ENCODE measurements at regions of chrX and their contacts with region 1.

Region 1: DNA sequence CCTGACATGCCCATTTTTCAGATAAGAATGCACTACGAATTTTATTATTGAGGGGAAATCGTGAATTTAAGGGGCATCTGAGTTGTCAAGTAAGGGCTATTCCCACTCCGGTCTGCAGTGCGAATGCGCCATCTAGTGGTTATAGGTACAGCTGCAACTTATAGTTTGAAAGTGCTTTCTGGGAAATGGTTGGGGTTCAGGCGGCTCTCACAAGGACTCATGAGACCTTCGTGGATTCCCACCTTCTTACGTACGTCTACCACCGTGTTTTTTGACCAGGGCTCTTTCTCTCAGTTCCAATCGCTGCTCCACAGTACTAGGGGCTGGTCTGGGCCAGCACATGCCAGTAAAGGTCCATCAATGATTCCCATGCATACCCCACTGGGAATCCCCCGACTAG is 12.3 kb downstream of the MSL3 start:
- DNase-seq: peak; percentile 26 to 62 (median 46)
- H3K4me3 ChIP-seq: no peak overlapping the region
- H3K27ac ChIP-seq: no peak overlapping the region
- H3K4me1 ChIP-seq: no peaks in the 10 kb centered on the region
- H3K27me3 ChIP-seq: no peaks in the 10 kb centered on the region
- CTCF ChIP-seq: peak; percentile 59 to 92 (median 70)
- POLR2A ChIP-seq: no peak

Region 2: GRCh38 chrX:11533211-11533651 is 237.1 kb before region 1 on chrX:
- intact Hi-C with region 1: loop called (anchors 5 to 10 kb)
- DNase-seq: no peak
- H3K4me3 ChIP-seq: no peak overlapping the region
- H3K27ac ChIP-seq: no peak overlapping the region
- H3K4me1 ChIP-seq: no peaks in the 10 kb centered on the region
- H3K27me3 ChIP-seq: no peaks in the 10 kb centered on the region
- CTCF ChIP-seq: peak; percentile 88 to 97 (median 96)
- POLR2A ChIP-seq: no peak

Region 3: DNA sequence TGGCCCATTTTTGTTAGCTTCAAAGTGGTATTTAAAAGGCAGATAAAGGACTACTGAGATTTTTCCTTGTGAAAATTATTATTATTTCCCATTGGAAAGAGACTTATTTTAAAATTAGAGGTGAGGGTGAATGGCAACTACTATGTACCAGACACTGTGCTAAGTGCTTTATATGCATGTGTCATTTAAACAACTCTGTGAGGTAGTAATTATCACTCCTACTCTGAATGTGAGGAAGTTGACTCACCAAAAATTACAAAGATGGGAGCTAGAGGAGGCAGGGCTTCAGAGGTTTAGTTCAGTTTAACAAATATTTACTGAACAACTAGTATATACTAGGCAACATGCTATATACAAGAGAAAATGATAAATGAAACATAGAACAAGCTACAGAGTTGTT is 66.0 kb after region 1 on chrX:
- intact Hi-C with region 1: no loop called
- DNase-seq: no peak
- H3K4me3 ChIP-seq: no peak overlapping the region
- H3K27ac ChIP-seq: no peak overlapping the region
- H3K4me1 ChIP-seq: no peaks in the 10 kb centered on the region
- H3K27me3 ChIP-seq: no peaks in the 10 kb centered on the region
- CTCF ChIP-seq: no peak
- POLR2A ChIP-seq: no peak

Measured in adrenal gland (tissue), 19 donors.